ENCODE measurements at regions of chr14 and their contacts with region 1.

Region 1: GRCh38 chr14:23478111-23478759 is 8.7 kb downstream of the NGDN start:
- DNase-seq: peak; percentile 16
- ATAC-seq: peak; percentile 84
- H3K4me3 ChIP-seq: no peak overlapping the region
- H3K27ac ChIP-seq: no peak overlapping the region
- H3K4me1 ChIP-seq: no peaks in the 10 kb centered on the region
- H3K27me3 ChIP-seq: no peaks in the 10 kb centered on the region
- CTCF ChIP-seq: peak; percentile 56 to 78 (median 66); a peak in 5 of 6 replicates
- EP300 ChIP-seq: no peak
- POLR2A ChIP-seq: no peak
- RAD21 ChIP-seq: peak; percentile 71

Region 2: DNA sequence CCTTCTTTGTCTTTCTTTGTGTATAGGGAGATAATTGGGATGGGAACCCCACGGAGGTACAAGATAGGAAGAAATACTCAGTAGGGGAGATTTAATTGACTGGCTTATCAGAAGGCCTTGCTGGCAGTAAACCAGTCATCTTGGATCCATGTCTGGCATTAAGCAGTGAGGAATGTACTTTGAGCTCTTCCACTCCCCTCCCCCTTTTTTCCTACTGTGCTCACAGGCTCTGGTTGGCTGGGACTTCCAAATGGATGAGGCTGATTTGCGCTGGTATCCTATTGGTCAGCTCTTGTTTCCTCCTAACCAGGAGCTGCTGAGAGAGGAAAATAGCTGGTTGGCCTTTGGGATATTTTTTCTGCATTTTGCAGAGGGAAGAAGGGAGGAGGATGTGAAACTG is 16.0 kb after region 1 on chr14:
- CTCF ChIA-PET with region 1: interaction called, 26 read pairs
- POLR2A ChIA-PET with region 1: interaction called, 6 read pairs
- RAD21 ChIA-PET with region 1: no interaction called
- SMC1A ChIA-PET with region 1: interaction called, 3 read pairs
- in situ Hi-C with region 1: no loop called
- intact Hi-C with region 1: no loop called
- DNase-seq: no peak
- ATAC-seq: no peak
- H3K4me3 ChIP-seq: no peak overlapping the region
- H3K27ac ChIP-seq: no peak overlapping the region
- H3K4me1 ChIP-seq: no peaks in the 10 kb centered on the region
- H3K27me3 ChIP-seq: no peaks in the 10 kb centered on the region
- CTCF ChIP-seq: no peak
- EP300 ChIP-seq: no peak
- POLR2A ChIP-seq: no peak
- RAD21 ChIP-seq: no peak

Region 3: DNA sequence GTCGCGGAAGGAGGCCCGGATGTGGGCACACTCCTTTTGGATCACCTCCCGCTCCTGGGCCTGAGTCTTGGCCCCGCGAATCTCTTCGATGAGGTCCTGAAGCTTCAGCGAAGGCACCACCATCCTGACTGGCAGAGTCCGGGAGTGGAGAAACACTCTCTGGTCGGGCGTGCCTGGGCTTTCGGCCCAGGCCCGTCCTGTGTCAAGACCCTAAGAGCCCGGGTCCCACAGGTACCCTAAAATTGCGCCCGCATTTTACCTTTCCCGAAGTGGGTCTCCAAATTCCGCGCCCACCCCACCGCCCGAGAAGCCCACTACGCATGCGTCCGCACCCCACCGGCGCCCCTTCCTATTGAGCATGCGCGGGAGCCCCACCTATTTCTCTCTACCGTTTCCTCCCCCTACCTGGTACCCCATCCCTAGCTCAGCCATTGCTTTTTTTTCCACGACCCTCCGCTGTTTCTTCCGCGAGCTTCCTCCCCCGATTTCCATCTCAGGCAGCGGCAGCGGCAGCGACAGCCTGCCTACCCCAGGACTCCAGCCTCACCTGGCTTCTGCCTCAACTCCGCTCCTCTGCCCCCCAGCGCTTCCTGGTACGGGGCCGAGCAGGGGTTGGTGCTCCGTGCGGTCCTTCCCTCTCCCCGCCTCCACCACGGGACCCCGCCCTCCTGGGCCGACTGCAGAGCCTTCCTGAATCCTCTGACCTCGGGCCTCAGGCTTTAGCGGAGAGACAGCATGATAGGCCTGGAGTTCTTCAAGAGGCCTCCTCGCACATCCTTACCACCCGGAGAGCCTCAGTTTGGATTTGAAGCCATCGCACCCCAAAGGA is 89.2 kb after region 1 on chr14 and contains the start of gene AP1G2:
- CTCF ChIA-PET with region 1: interaction called, 436 read pairs
- POLR2A ChIA-PET with region 1: interaction called, 3 read pairs
- RAD21 ChIA-PET with region 1: interaction called, 6 read pairs
- SMC1A ChIA-PET with region 1: interaction called, 124 read pairs
- in situ Hi-C with region 1: no loop called
- intact Hi-C with region 1: loop called (anchors 1 kb)
- DNase-seq: peak; percentile 69
- ATAC-seq: peak; percentile 95
- H3K4me3 ChIP-seq: peak within 1 kb of the TSS; percentile 93
- H3K27ac ChIP-seq: peak within 1 kb of the TSS; percentile 76
- H3K4me1 ChIP-seq: peaks cover 11% of the 10 kb centered on the region
- H3K27me3 ChIP-seq: no peaks in the 10 kb centered on the region
- CTCF ChIP-seq: no peak
- EP300 ChIP-seq: 0 out of 4 replicates have a peak, but pooled peaks of 1 of the 2 experiments have one; percentile 31
- POLR2A ChIP-seq: peak; percentile 92
- RAD21 ChIP-seq: no peak
- polyA plus RNA-seq, gene AP1G2: 55.6 to 65.5 TPM

Measured in GM12878 (cell line).